ENCODE measurements at regions of chr3 and their contacts with region 1.

Region 1: GRCh38 chr3:191388823-191389222 is 58.5 kb upstream of the UTS2B start:
- DNase-seq: no peak
- ATAC-seq: no peak
- H3K4me3 ChIP-seq: no peak overlapping the region
- H3K27ac ChIP-seq: no peak overlapping the region
- H3K4me1 ChIP-seq: peaks cover 0 to 9% (median 0%) of the 10 kb centered on the region in 9 donors
- H3K27me3 ChIP-seq: no peaks in the 10 kb centered on the region
- CTCF ChIP-seq: peak in 7 of 9 donors; percentile 21 to 53 (median 41)

Region 2: GRCh38 chr3:191136347-191136746 is 252.5 kb before region 1 on chr3:
- intact Hi-C with region 1: loop called in 2 of 10 experiments (anchors 10 kb)
- DNase-seq: no peak
- ATAC-seq: no peak
- H3K4me3 ChIP-seq: no peak overlapping the region
- H3K27ac ChIP-seq: no peak overlapping the region
- H3K4me1 ChIP-seq: peaks cover 0 to 4% (median 0%) of the 10 kb centered on the region in 9 donors
- H3K27me3 ChIP-seq: no peaks in the 10 kb centered on the region
- CTCF ChIP-seq: peak in 8 of 9 donors; percentile 14 to 59 (median 39)

Region 3: GRCh38 chr3:191435981-191436380 is 47.2 kb after region 1 on chr3:
- intact Hi-C with region 1: no loop called
- DNase-seq: no peak
- ATAC-seq: no peak
- H3K4me3 ChIP-seq: no peak overlapping the region
- H3K27ac ChIP-seq: no peak overlapping the region
- H3K4me1 ChIP-seq: no peaks in the 10 kb centered on the region
- H3K27me3 ChIP-seq: no peaks in the 10 kb centered on the region
- CTCF ChIP-seq: no peak